ENCODE measurements at regions of chr3 and their contacts with region 1.

Region 1: GRCh38 chr3:183468424-183468823 is 40.0 kb upstream of the MCF2L2 start:
- DNase-seq: no peak
- H3K4me3 ChIP-seq: no peak overlapping the region
- H3K27ac ChIP-seq: no peak overlapping the region
- H3K4me1 ChIP-seq: no peaks in the 10 kb centered on the region
- H3K27me3 ChIP-seq: no peaks in the 10 kb centered on the region
- CTCF ChIP-seq: no peak

Region 2: DNA sequence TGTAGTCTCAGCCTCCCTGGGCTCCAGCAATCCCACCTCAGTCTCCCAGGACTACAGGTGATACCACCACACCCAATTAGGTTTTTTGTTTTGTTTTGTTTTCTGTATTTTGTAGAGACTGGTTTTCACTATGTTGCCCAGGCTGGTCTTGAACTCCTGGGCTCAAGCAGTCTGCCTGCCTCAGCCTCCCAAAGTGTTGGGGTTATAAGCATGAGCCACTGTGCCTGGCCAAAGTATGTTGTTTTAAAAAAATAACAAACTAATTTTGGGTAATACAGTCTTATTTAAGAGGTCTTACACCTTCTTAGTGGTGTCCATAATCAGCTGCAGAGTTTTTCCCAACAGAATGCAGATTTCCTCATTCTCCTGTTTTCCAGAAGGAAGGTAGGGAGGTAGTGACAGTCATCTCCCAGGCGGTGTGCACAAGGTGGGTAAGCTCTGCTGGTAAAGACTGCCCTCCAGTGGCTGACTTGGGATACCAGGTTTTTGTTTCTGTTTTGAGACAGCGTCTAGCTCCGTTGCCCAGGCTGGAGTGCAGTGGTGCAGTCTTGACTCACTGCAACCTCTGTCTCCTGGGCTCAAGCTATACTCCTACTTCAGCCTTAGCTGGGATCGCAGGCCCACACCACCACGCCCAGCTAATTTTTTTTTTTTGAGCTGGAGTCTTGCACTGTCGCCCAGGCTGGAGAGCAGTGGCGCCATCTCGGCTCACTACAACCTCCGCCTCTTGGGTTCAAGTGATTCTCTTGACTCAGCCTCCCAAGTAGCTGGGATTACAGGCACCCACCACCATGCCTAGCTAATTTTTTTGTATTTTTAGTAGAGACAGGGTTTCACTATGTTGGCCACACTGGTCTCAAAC is 298.6 kb after region 1 on chr3:
- intact Hi-C with region 1: loop called (anchors 2 kb)
- DNase-seq: peak in 1 of 2 donors; percentile 69
- H3K4me3 ChIP-seq: no peak overlapping the region
- H3K27ac ChIP-seq: no peak overlapping the region
- H3K4me1 ChIP-seq: no peaks in the 10 kb centered on the region
- H3K27me3 ChIP-seq: no peaks in the 10 kb centered on the region
- CTCF ChIP-seq: peak; percentile 62 to 84 (median 65)

Measured in ascending aorta (tissue), 2 donors.